ENCODE measurements at regions of chr13 and their contacts with region 1.

Region 1: DNA sequence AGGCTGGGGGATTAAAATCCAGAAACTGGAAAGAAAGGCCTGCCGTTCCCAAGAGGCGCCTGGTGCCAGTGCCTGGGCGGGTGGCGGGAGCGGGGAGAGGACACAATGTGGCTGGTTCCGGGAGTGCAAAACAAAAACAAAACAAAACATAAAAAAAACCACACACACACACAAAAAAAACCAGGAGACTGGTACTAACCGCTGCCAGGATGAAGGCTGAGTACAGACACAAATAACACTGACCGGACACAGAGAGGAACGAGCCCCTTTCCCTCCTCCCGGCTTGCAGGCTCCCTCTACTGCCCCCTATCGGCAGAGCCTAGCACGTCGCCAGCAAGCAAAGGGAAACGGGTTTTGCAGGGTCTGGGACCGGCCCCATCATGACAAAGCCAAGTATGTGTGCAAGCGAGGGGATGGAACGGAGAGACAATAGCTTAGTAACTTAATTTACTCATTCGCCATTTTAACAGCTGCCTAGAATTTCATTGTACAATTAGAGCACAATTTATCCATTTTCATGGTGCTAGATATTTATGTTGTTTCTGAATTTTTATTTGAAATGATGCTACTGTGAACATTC is 17.9 kb upstream of the ZDHHC20 start:
- DNase-seq: peak; percentile 91 to 95 (median 93)
- H3K4me3 ChIP-seq: peak overlapping the region in 6 of 7 experiments; percentile 59 to 87 (median 63)
- H3K27ac ChIP-seq: peak overlapping the region; percentile 27 to 71
- H3K4me1 ChIP-seq: peaks cover 0 to 9% (median 4%) of the 10 kb centered on the region in 4 experiments
- H3K27me3 ChIP-seq: peaks cover 0 to 8% (median 2%) of the 10 kb centered on the region in 5 experiments

Region 2: DNA sequence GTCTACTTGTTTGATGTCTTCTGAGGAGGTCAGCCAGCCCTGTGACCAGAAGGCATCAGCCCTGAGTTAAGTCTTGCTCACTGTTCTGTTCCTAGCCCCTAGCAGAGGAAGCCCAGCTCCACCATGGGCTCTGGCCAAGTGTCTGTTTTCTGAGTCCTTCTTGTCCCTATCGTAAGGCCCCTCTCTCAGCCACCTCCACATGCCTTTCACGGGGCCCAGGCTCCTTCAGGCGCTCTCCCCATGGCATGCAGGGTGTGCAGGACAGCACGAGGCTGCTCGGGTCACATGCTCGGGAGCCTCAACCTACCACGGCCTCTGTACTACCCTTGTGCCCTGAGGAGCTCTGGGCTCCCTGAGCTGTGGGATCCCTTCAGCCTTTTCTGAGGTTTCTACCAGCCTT is 367.8 kb before region 1 on chr13:
- CTCF ChIA-PET with region 1: interaction called, 13 read pairs
- POLR2A ChIA-PET with region 1: no interaction called
- DNase-seq: no peak
- H3K4me3 ChIP-seq: no peak overlapping the region
- H3K27ac ChIP-seq: no peak overlapping the region
- H3K4me1 ChIP-seq: peaks cover 0 to 2% (median 0%) of the 10 kb centered on the region in 4 experiments
- H3K27me3 ChIP-seq: no peaks in the 10 kb centered on the region

Region 3: DNA sequence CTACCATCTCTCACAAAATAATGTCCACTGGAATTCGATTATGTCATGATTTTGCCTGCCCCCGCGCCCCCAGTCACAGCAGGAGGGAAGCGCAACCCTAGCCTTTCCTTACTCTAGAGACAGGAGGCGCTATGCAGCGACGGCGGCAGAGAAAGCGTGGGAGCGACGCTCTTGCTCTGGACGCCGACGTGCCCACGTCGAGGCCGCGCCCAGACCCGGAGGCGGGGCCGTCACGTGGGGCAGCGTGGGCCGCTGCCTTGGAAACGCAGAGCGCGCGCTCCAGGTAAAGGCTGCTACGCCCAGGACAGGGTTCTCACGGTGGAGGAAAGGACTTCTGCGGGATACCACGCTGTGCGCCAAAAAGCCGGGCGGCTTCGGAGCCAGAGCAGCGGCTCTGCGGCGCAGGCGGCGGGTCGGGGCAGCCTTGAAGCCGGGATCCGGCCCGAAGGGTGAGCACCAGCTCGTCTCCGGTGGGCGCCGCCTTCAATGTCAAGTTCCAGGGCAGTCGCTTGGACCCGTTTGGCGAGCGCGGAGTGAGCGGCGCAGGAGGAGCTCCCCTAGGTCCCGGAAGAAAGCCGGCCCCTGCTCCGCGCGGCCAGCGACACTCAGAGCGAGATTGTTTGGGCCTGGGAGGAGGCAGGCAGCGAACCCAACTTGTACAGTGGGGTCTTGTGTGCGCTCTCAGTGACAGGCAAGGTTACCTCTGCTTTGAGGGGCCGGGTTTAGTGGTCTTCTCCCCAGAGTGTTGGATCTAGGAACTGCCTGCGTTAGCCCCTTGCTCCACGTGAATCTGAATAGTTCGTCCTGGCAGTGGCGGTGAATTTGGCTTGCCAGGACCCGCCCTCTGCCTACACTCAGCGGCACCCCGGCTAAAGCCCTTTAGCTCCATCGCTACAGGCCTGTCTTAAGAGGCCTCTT is 178.8 kb before region 1 on chr13:
- CTCF ChIA-PET with region 1: interaction called, 100 read pairs
- POLR2A ChIA-PET with region 1: interaction called, 3 read pairs
- DNase-seq: peak; percentile 91 to 94 (median 93)
- H3K4me3 ChIP-seq: peak overlapping the region; percentile 77 to 98 (median 94)
- H3K27ac ChIP-seq: peak overlapping the region; percentile 58 to 83
- H3K4me1 ChIP-seq: peaks cover 7 to 24% (median 19%) of the 10 kb centered on the region in 4 experiments
- H3K27me3 ChIP-seq: no peaks in the 10 kb centered on the region

Region 4: GRCh38 chr13:21463424-21463823 is 13.6 kb before region 1 on chr13:
- CTCF ChIA-PET with region 1: interaction called, 11 read pairs
- POLR2A ChIA-PET with region 1: no interaction called
- DNase-seq: no peak
- H3K4me3 ChIP-seq: no peak overlapping the region
- H3K27ac ChIP-seq: no peak overlapping the region
- H3K4me1 ChIP-seq: peaks cover 0 to 3% (median 0%) of the 10 kb centered on the region in 4 experiments
- H3K27me3 ChIP-seq: no peaks in the 10 kb centered on the region

Region 5: DNA sequence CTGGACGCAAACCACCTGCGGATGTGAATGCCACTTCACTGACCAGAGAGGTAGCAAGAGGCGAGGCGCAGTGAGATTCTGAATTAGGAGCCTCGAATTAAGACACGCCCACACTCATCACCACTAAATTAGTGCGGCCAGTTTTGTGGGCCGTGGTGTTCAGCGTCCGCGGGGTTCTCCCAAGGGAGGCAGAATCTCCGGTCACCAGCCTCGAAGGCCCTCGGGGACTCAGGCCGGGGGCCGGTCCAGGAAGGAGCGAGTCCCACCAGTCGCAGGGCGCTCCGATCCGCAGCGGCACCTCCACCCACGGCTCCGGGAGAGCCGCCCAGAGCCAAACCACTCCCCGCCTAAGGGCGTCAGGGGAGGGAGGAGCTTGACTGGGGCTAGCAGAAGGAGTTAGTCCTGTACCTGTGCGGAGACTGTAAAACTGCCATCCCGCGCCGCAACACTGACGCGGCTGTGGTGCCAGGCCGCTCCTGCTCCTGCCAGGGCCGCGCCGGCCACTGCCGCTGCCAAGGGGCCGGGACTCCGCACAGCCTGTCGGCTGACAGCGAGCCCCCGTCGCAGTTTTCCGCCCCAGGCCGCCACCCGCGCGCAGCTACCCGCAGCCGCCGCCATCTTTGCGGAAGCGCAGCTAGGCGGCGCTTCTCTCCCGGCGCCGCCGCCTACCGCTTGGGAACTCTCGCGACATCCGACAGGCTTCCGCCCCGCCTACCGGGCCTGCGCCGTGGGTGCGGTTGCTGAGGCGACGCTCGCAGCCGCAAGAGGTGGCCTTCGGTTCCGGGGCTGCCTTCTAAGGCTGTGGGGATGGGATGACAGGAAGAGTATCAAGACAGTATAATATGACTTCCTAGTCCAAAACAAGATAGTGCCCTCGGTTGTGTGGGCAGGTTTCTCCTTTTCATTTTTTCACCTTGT is 126.8 kb after region 1 on chr13 and contains the start of gene MICU2:
- CTCF ChIA-PET with region 1: no interaction called
- POLR2A ChIA-PET with region 1: no interaction called
- DNase-seq: peak; percentile 94 to 97 (median 97)
- H3K4me3 ChIP-seq: peak within 1 kb of the TSS; percentile 72 to 92 (median 87)
- H3K27ac ChIP-seq: peak within 1 kb of the TSS; percentile 94 to 96
- H3K4me1 ChIP-seq: peaks cover 5 to 9% (median 7%) of the 10 kb centered on the region in 4 experiments
- H3K27me3 ChIP-seq: peaks cover 3 to 20% (median 9%) of the 10 kb centered on the region in 5 experiments